ENCODE measurements at regions of chr21 and their contacts with region 1.

Region 1: GRCh38 chr21:43984905-43985689 is 27.0 kb upstream of the TRAPPC10 start:
- DNase-seq: peak in 1 of 14 experiments; percentile 13
- ATAC-seq: peak; percentile 68
- H3K4me3 ChIP-seq: no peak overlapping the region
- H3K4me3 Mint-ChIP-seq: no peak overlapping the region
- H3K27ac ChIP-seq: no peak overlapping the region
- H3K27ac Mint-ChIP-seq: peak overlapping the region; percentile 73
- H3K4me1 ChIP-seq: peaks cover 7% of the 10 kb centered on the region
- H3K4me1 Mint-ChIP-seq: peaks cover 20% of the 10 kb centered on the region
- H3K27me3 ChIP-seq: no peaks in the 10 kb centered on the region
- H3K27me3 Mint-ChIP-seq: no peaks in the 10 kb centered on the region
- CTCF ChIP-seq: no peak

Region 2: DNA sequence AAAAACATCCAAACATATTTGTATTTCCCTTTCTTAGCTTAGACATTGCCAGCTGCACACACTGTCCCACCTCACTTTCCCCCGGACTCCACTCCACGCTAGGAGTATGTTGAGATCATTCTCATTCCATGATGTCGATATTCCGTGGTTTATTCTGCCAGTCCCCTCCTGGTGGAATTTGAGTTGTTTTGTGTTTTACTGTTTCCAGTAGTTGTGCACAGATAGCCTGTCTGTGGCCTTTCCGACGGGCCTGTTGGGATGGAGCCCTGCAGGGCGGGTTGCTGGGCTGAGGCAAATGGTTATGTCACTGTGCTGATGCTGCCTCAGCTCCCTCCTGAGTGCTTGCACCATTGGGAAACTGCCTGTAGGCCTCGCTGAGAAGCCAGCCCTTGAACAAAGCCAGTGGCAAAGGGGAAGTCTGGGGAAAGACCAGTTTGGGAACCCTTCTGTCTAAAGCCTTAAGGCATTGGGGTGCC is 39.8 kb after region 1 on chr21:
- CTCF ChIA-PET with region 1: no interaction called
- POLR2A ChIA-PET with region 1: no interaction called
- intact Hi-C with region 1: loop called in 1 of 2 experiments (anchors 10 kb)
- DNase-seq: peak in 2 of 14 experiments; percentile 42 to 51
- ATAC-seq: no peak
- H3K4me3 ChIP-seq: no peak overlapping the region
- H3K4me3 Mint-ChIP-seq: peak overlapping the region; percentile 16
- H3K27ac ChIP-seq: no peak overlapping the region
- H3K27ac Mint-ChIP-seq: peak overlapping the region; percentile 55
- H3K4me1 ChIP-seq: peaks cover 72% of the 10 kb centered on the region
- H3K4me1 Mint-ChIP-seq: peaks cover 93% of the 10 kb centered on the region
- H3K27me3 ChIP-seq: no peaks in the 10 kb centered on the region
- H3K27me3 Mint-ChIP-seq: no peaks in the 10 kb centered on the region
- CTCF ChIP-seq: no peak

Measured in CD4-positive, alpha-beta T cell (primary cell).